Colonic mucosa (tissue), 4 donors: ENCODE measurements at regions of chr10 and their contacts with region 1.

Region 1: DNA sequence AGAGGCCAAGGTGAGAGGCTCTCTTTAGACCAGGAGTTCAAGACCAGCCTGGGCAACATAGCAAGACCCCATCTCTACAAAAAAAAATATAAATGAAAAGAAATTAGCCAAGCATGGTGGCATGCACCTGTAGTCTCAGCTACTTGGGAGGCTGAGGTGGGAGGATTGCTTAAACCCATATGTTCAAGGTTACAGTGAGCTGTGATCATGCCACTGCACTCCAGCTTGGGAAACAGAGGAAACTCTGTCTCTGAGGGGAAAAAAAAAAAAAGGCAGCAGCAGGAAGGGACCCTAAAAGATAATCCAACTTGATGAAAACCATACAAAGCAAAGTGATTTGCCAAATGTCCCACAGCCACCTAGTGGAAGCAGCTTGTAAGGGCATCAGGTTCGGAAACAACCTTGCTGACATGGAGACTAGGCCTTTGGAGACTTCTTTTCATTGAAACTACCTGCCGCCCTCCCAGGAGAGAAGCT is 15.6 kb upstream of the PBLD start:
- DNase-seq: peak; percentile 58
- H3K4me3 ChIP-seq: no peak overlapping the region
- H3K27ac ChIP-seq: no peak overlapping the region
- H3K4me1 ChIP-seq: no peaks in the 10 kb centered on the region
- H3K27me3 ChIP-seq: no peaks in the 10 kb centered on the region
- CTCF ChIP-seq: peak; percentile 63

Region 2: DNA sequence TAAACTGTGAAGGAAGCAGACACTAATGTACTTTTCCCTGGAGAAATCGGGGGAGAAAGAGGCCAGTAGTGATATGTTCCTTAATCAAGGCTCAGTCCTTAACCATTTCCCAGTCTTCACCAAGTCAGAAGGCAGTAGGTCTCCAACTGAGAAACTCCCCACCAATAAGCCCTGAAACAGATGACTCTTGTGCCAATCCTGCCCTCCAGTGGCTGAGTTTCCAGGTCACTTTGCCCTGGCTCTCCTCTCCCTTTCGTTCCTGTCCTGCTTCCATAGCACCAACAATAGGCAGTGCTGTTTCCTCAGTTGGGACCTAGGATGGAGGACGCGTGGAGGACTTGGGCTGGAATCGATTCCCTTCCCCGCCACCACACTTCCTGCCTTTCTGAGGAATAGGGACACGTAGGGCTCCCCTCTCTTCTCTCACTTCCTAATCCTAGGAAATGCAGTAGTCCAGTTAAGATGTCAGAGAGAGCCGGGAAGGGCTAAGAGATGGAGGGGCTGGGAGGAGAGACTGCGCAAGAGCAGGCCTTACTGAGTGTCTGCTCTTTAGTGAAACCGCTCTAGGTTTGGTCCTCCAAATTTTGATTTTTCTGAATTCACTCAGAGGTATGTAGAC is 139.8 kb before region 1 on chr10:
- intact Hi-C with region 1: loop called (anchors 2 kb)
- DNase-seq: peak; percentile 66
- H3K4me3 ChIP-seq: no peak overlapping the region
- H3K27ac ChIP-seq: no peak overlapping the region
- H3K4me1 ChIP-seq: no peaks in the 10 kb centered on the region
- H3K27me3 ChIP-seq: no peaks in the 10 kb centered on the region
- CTCF ChIP-seq: peak; percentile 45

Region 3: GRCh38 chr10:68288717-68289116 is 59.6 kb before region 1 on chr10:
- intact Hi-C with region 1: no loop called
- DNase-seq: no peak
- H3K4me3 ChIP-seq: no peak overlapping the region
- H3K27ac ChIP-seq: no peak overlapping the region
- H3K4me1 ChIP-seq: no peaks in the 10 kb centered on the region
- H3K27me3 ChIP-seq: no peaks in the 10 kb centered on the region
- CTCF ChIP-seq: no peak